CD8-positive, alpha-beta T cell (primary cell): ENCODE measurements at regions of chr17 and their contacts with region 1.

Region 1: GRCh38 chr17:77429919-77430752 is 289.4 kb downstream of the SEC14L1 start:
- DNase-seq: peak; percentile 73 to 90 (median 85)
- ATAC-seq: peak; percentile 32
- H3K4me3 ChIP-seq: no peak overlapping the region
- H3K4me3 Mint-ChIP-seq: peak overlapping the region; percentile 32
- H3K27ac ChIP-seq: peak overlapping the region in 1 of 2 experiments; percentile 14
- H3K27ac Mint-ChIP-seq: peak overlapping the region; percentile 97
- H3K4me1 ChIP-seq: peaks cover 84% of the 10 kb centered on the region
- H3K4me1 Mint-ChIP-seq: peaks cover 85% of the 10 kb centered on the region
- H3K27me3 ChIP-seq: no peaks in the 10 kb centered on the region
- H3K27me3 Mint-ChIP-seq: no peaks in the 10 kb centered on the region
- CTCF ChIP-seq: peak; percentile 73

Region 2: DNA sequence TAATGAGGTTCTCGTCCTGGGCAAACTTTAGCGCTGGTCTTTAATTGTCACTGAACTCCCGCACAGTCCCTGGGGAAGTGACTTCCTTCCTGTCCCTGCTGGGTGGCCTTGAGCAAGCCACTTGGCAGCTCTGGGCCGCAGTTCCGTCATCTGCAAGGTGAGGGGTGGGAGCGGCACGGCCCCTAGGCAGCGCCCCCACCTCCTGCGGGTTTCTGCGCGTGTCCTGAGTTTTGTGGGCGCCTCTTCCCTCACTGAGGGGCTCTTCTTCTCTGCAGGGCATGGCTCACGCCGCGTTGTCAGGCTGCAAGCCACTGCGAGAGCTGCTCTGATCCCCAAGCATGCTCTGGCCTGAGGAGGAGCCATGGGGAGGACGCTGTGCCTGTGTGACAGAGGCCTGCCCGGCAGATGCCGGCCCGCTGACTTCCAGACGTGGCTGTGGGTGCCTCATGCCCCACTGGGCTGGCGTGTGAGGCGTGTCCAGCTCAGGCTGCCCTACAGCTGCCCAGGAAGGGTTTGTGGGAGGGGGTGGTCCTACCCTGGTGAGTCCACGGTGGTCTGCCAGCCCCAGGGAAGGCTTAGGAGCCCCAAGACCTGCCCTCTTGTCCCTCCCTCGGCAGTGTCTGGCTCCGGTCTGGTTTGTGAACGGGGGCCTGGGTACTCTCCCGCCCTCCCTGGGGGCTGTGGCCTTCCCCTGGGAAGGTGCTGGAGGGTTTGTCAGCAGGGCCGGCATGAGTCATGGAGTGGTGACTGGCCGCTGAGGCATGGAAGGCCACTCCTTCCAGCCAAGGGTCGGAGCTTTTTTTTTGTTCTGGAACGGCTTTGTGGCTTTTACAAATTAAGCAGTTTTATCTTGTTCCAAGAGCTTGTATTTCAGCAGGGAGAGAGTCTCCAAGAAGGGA is 107.4 kb before region 1 on chr17:
- CTCF ChIA-PET with region 1: interaction called, 11 read pairs
- POLR2A ChIA-PET with region 1: interaction called, 6 read pairs
- intact Hi-C with region 1: no loop called
- DNase-seq: no peak
- ATAC-seq: no peak
- H3K4me3 ChIP-seq: no peak overlapping the region
- H3K4me3 Mint-ChIP-seq: no peak overlapping the region
- H3K27ac ChIP-seq: no peak overlapping the region
- H3K27ac Mint-ChIP-seq: no peak overlapping the region
- H3K4me1 ChIP-seq: peaks cover 65% of the 10 kb centered on the region
- H3K4me1 Mint-ChIP-seq: peaks cover 50% of the 10 kb centered on the region
- H3K27me3 ChIP-seq: no peaks in the 10 kb centered on the region
- H3K27me3 Mint-ChIP-seq: no peaks in the 10 kb centered on the region
- CTCF ChIP-seq: no peak

Region 3: GRCh38 chr17:77382966-77383612 is 47.0 kb before region 1 on chr17:
- CTCF ChIA-PET with region 1: interaction called, 28 read pairs
- POLR2A ChIA-PET with region 1: interaction called, 11 read pairs
- intact Hi-C with region 1: loop called in 1 of 2 experiments (anchors 5 kb)
- DNase-seq: no peak
- ATAC-seq: no peak
- H3K4me3 ChIP-seq: peak overlapping the region; percentile 30 to 34
- H3K4me3 Mint-ChIP-seq: peak overlapping the region; percentile 75
- H3K27ac ChIP-seq: peak overlapping the region in 1 of 2 experiments; percentile 40
- H3K27ac Mint-ChIP-seq: peak overlapping the region; percentile 91
- H3K4me1 ChIP-seq: peaks cover 95% of the 10 kb centered on the region
- H3K4me1 Mint-ChIP-seq: peaks cover 89% of the 10 kb centered on the region
- H3K27me3 ChIP-seq: no peaks in the 10 kb centered on the region
- H3K27me3 Mint-ChIP-seq: no peaks in the 10 kb centered on the region
- CTCF ChIP-seq: no peak

Region 4: DNA sequence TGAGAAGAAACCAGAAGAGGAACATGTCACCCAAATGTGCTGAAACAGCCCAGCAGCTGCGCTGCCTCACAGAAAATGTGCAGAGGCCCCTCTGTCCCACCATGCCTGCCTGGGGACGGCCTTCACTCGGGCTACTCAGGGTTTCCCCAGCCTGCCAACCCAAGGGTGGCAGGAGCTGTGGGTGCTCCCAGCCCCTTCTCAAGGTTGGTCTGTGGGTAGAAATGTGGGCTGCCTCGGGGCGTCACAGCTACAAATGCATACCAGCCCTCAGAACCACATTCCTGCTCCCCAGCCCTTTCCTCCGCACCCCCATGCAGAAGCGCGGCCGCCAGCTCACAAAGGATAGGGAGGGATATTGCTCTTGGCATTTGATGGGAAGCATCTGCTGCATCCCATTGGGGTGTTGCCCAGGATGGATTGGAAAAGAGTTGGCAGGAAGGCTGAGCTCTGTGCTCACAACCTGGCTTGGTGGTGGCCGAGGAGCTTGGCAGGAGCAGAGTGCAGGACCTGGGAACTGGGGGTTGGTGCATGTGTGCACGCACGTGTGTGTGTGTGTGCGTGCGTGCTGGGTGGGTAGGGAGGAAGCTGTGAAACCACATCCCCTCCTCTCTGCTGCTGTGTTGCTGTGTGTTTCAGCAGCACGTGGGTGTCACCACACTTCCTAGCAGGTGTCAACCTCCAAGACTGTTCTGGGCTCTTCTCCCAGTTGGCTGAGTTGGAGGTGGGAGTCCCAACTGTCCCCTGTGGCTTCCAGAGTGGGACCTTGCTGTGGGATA is 15.0 kb after region 1 on chr17:
- CTCF ChIA-PET with region 1: interaction called, 142 read pairs
- POLR2A ChIA-PET with region 1: interaction called, 133 read pairs
- intact Hi-C with region 1: loop called in 1 of 2 experiments (anchors 1 kb)
- DNase-seq: peak; percentile 75 to 99 (median 85)
- ATAC-seq: peak; percentile 62
- H3K4me3 ChIP-seq: peak overlapping the region; percentile 32 to 38
- H3K4me3 Mint-ChIP-seq: peak overlapping the region; percentile 82
- H3K27ac ChIP-seq: peak overlapping the region; percentile 64 to 72
- H3K27ac Mint-ChIP-seq: peak overlapping the region; percentile 97
- H3K4me1 ChIP-seq: peaks cover 92% of the 10 kb centered on the region
- H3K4me1 Mint-ChIP-seq: peaks cover 90% of the 10 kb centered on the region
- H3K27me3 ChIP-seq: no peaks in the 10 kb centered on the region
- H3K27me3 Mint-ChIP-seq: no peaks in the 10 kb centered on the region
- CTCF ChIP-seq: no peak

Region 5: DNA sequence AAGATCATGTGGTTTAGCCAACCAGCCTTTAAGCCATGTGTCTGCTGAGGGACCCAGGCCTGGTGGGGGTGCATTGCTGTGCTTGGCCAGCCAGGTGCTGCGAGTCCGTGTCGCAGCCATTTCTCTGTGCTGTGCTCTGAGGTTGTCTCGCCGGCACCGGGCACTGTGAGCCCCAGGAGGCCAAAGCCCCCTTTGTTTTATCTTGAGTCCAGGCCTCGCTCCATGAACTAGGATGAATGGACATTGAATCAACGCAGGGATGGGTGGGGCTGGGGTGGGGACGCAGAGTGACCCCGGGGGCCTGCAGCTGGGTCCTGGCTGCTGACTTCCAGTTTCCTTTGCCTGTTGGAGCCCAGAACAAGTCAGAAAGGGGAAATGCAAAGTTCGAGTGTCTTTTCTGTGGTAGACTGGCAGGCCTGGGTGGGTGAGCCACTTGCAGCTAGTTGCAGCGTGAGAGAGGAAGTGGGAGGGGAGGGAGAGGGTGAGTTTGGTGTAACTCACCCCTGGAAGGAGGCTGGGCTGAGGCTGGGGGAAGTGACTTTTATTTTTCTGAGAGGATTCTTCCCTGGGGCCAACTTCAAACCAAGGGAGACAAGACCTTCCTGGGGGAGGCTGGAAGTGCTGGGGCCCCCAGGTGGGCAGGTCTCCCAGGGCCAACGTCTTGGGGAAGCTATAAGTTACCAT is 35.4 kb after region 1 on chr17:
- CTCF ChIA-PET with region 1: interaction called, 16 read pairs
- POLR2A ChIA-PET with region 1: interaction called, 242 read pairs
- intact Hi-C with region 1: loop called in 1 of 2 experiments (anchors 1 kb)
- DNase-seq: peak; percentile 58 to 93 (median 82)
- ATAC-seq: peak; percentile 91
- H3K4me3 ChIP-seq: peak overlapping the region; percentile 29 to 51
- H3K4me3 Mint-ChIP-seq: peak overlapping the region; percentile 71
- H3K27ac ChIP-seq: peak overlapping the region; percentile 28 to 68
- H3K27ac Mint-ChIP-seq: peak overlapping the region; percentile 94
- H3K4me1 ChIP-seq: peaks cover 94% of the 10 kb centered on the region
- H3K4me1 Mint-ChIP-seq: peaks cover 87% of the 10 kb centered on the region
- H3K27me3 ChIP-seq: no peaks in the 10 kb centered on the region
- H3K27me3 Mint-ChIP-seq: no peaks in the 10 kb centered on the region
- CTCF ChIP-seq: no peak

Region 6: GRCh38 chr17:77489239-77489910 is 59.2 kb after region 1 on chr17:
- CTCF ChIA-PET with region 1: interaction called, 175 read pairs
- POLR2A ChIA-PET with region 1: interaction called, 31 read pairs
- intact Hi-C with region 1: no loop called
- DNase-seq: peak in 1 of 9 experiments; percentile 10
- ATAC-seq: no peak
- H3K4me3 ChIP-seq: no peak overlapping the region
- H3K4me3 Mint-ChIP-seq: no peak overlapping the region
- H3K27ac ChIP-seq: peak overlapping the region in 1 of 2 experiments; percentile 25
- H3K27ac Mint-ChIP-seq: peak overlapping the region; percentile 27
- H3K4me1 ChIP-seq: peaks cover 42% of the 10 kb centered on the region
- H3K4me1 Mint-ChIP-seq: peaks cover 31% of the 10 kb centered on the region
- H3K27me3 ChIP-seq: no peaks in the 10 kb centered on the region
- H3K27me3 Mint-ChIP-seq: no peaks in the 10 kb centered on the region
- CTCF ChIP-seq: no peak

Region 7: GRCh38 chr17:77548967-77549366 is 118.8 kb after region 1 on chr17:
- CTCF ChIA-PET with region 1: no interaction called
- POLR2A ChIA-PET with region 1: no interaction called
- intact Hi-C with region 1: no loop called
- DNase-seq: no peak
- ATAC-seq: no peak
- H3K4me3 ChIP-seq: no peak overlapping the region
- H3K4me3 Mint-ChIP-seq: no peak overlapping the region
- H3K27ac ChIP-seq: no peak overlapping the region
- H3K27ac Mint-ChIP-seq: no peak overlapping the region
- H3K4me1 ChIP-seq: no peaks in the 10 kb centered on the region
- H3K4me1 Mint-ChIP-seq: no peaks in the 10 kb centered on the region
- H3K27me3 ChIP-seq: peaks cover 0 to 2% of the 10 kb centered on the region in 2 experiments
- H3K27me3 Mint-ChIP-seq: no peaks in the 10 kb centered on the region
- CTCF ChIP-seq: no peak